ENCODE measurements at regions of chr2 and their contacts with region 1.

Region 1: GRCh38 chr2:199739413-199740110 is 111.4 kb downstream of the FTCDNL1 start:
- DNase-seq: peak; percentile 7
- H3K4me3 ChIP-seq: no peak overlapping the region
- H3K27ac ChIP-seq: no peak overlapping the region
- H3K27me3 ChIP-seq: peaks cover 2% of the 10 kb centered on the region
- CTCF ChIP-seq: peak; percentile 87

Region 2: DNA sequence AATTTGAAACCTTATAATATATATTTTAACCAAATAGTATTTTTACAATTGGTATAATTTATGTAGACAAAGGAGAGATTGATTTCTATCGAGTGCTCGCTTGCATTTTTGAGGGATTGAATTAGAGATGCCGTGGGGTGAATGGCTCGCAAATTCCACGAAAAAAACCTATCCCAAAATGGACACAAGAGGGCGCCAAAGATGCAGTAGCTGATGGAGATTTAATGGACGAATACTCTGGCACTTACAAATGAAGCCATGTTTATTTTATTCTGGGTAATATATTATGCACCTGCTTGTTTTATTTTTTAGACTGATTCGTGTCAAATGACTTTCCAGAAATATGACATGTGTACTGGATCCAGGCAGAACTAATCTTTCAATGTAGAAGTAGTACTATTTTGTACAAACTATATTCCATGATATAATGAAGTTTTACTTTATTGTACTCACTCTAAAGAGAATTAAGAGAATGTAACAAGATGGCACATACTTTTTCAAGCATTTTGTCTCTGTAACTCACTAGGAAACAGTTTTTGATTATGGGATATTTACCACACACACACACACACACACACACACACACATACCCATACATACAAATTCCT is 1429.8 kb before region 1 on chr2:
- CTCF ChIA-PET with region 1: interaction called, 31 read pairs
- POLR2A ChIA-PET with region 1: no interaction called
- DNase-seq: peak; percentile 10
- H3K4me3 ChIP-seq: no peak overlapping the region
- H3K27ac ChIP-seq: no peak overlapping the region
- H3K27me3 ChIP-seq: no peaks in the 10 kb centered on the region
- CTCF ChIP-seq: peak; percentile 91

Region 3: DNA sequence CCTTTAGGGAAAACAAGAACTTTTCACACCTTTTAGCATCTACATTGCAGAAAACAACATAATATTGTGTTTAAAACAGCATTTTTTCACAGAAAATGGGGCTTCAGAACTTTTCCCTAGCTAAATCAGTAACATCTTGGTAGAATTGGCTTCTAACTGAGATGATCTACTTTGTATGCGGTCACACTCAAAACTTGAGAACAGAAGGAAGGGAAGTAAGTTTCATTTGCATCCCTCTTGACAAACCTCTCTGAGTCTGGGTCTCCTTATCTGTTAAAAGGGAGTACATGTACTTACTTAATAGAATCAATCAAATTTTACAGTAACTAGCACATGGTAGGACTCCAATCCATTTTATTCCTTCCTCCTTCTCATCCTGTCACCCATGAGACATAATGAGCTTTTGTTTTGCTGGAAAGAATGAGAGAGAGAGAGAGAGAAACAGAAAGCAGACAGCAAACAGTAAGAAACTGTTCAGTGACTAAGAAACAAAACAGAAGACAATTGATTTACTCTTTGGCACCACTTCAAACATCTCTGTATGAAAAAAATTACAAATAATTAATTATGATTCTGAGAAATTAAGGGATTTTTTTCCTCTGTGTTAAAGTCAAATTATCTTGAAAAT is 669.1 kb before region 1 on chr2:
- CTCF ChIA-PET with region 1: no interaction called
- POLR2A ChIA-PET with region 1: no interaction called
- DNase-seq: no peak
- H3K4me3 ChIP-seq: no peak overlapping the region
- H3K27ac ChIP-seq: no peak overlapping the region
- H3K27me3 ChIP-seq: no peaks in the 10 kb centered on the region
- CTCF ChIP-seq: no peak

Region 4: DNA sequence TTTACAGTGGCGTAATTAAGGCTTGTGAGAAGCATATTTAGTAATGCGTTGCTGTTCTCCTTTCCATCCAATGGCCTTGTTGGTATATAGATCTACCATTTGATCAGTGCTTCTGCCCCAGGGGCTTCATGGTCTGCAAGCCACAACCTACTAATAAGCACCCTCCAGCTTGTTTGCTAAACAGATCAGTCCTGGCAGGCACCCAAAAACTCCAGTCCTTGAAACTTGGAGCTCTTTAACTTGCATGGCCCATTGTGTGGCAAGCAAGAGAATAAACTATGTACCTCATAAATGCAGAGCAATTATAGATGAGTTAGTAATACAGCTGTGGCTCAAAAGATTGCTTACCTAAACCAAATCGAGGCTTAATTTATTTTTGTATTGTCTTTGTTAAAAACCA is 47.1 kb before region 1 on chr2:
- CTCF ChIA-PET with region 1: no interaction called
- POLR2A ChIA-PET with region 1: no interaction called
- DNase-seq: no peak
- H3K4me3 ChIP-seq: no peak overlapping the region
- H3K27ac ChIP-seq: no peak overlapping the region
- H3K27me3 ChIP-seq: no peaks in the 10 kb centered on the region
- CTCF ChIP-seq: no peak

Region 5: GRCh38 chr2:199704358-199705238 is 35.0 kb before region 1 on chr2:
- CTCF ChIA-PET with region 1: interaction called, 74 read pairs
- POLR2A ChIA-PET with region 1: no interaction called
- DNase-seq: no peak
- H3K4me3 ChIP-seq: no peak overlapping the region
- H3K27ac ChIP-seq: no peak overlapping the region
- H3K27me3 ChIP-seq: no peaks in the 10 kb centered on the region
- CTCF ChIP-seq: peak; percentile 60

Region 6: GRCh38 chr2:199751472-199752120 is 12.0 kb after region 1 on chr2:
- CTCF ChIA-PET with region 1: interaction called, 27 read pairs
- POLR2A ChIA-PET with region 1: no interaction called
- DNase-seq: no peak
- H3K4me3 ChIP-seq: no peak overlapping the region
- H3K27ac ChIP-seq: no peak overlapping the region
- H3K27me3 ChIP-seq: no peaks in the 10 kb centered on the region
- CTCF ChIP-seq: no peak

Region 7: DNA sequence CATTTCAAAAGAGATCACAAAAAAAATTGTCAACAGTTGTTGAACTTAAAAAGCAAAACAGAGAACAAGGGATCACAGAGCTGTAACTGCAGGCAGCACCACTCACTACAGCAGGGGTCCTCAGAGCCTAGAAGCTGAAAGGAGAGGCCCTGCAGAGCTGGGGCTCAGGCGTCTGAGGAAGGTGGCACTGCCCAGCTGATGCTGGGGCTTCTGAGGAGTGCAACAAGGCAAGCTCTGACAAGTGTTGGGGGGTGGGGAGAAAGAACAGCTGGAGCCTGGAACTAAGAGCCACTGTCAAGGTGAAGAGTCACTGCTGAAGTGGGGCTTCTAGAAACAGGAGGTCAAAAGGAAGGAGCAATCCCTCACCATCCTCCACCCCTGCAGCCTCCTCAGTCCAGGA is 65.3 kb after region 1 on chr2:
- CTCF ChIA-PET with region 1: interaction called, 12 read pairs
- POLR2A ChIA-PET with region 1: no interaction called
- DNase-seq: no peak
- H3K4me3 ChIP-seq: no peak overlapping the region
- H3K27ac ChIP-seq: no peak overlapping the region
- H3K27me3 ChIP-seq: no peaks in the 10 kb centered on the region
- CTCF ChIP-seq: no peak

Region 8: DNA sequence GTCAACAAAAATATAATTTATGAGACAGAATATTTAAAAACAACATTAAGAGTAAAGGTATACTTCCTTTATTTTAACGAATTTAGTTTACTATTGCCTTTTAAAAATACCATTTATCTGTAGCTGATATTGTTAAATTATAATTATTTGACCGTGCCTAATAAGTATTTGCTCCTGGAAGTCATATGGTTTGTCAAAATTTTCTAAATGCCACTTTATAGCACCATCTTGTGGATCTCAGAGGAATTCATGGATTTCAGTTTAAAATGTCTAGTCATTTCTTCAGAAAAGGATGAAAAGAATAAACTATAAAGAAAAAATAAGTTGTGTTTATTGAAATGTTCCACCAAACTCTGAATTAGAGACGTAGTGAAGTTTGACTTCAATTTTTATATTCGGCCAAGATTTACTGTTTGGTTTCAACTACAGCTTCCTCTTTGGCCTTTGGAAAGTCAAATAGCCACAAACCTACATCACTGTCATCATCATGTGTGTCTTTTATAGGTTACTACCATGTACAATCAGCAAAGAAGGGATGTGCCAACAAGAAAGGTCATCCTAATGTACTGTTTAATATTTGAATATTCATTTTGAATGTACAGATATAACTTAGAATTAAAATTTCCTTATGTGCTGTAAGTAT is 121.7 kb after region 1 on chr2:
- CTCF ChIA-PET with region 1: interaction called, 15 read pairs
- POLR2A ChIA-PET with region 1: no interaction called
- DNase-seq: no peak
- H3K4me3 ChIP-seq: no peak overlapping the region
- H3K27ac ChIP-seq: no peak overlapping the region
- H3K27me3 ChIP-seq: peaks cover 2% of the 10 kb centered on the region
- CTCF ChIP-seq: peak; percentile 65